ENCODE measurements at regions of chr1 and their contacts with region 1.

Region 1: DNA sequence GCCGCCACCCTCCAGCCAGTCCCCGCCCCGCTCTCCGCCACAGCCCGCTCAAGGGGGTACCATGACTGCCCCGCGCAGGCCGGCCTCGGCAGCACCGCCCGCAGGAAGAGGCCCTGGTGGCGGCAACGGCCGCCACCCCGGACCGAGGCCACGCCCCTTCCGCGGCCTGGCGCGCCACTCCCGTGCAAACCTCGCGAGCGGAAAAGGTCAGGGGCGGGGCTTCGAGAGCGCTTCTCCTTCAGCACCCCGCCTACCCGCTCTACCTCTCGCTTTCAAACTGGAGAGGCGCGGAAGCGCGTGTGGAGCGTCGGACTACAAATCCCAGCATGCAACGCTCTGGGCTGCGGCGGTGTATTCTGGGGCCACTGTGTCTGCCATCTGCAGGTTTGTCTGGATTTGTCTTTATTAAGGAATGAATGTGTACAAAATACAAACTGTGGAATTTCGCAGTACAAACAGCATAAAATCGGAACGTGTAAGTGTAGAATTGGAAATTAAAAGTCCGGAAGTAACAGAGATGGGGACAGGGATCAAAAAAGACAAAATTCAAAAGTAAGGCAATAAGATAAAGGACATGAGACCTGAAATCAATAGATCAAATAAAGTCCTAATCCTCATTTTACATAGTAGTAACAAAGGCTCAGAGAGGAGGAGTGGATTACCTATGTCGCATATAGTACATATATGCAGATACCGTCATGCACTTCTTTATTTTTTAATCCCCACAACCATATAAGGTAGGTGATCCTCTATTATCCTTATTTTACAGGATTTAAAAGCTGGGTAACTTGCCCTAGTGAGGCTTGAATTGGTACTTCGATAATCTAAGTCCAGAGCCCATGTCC is 464 bp upstream of the ADSS2 start:
- DNase-seq: peak; percentile 98 to 99
- H3K4me3 ChIP-seq: peak overlapping the region; percentile 79 to 99
- H3K27ac ChIP-seq: peak overlapping the region; percentile 94
- H3K4me1 ChIP-seq: peaks cover 32% of the 10 kb centered on the region
- H3K27me3 ChIP-seq: no peaks in the 10 kb centered on the region
- CTCF ChIP-seq: peak; percentile 4 to 60 (median 19)
- POLR2A ChIP-seq: no peak

Region 2: GRCh38 chr1:244654341-244655038 is 202.3 kb after region 1 on chr1:
- intact Hi-C with region 1: loop called (anchors 5 kb)
- DNase-seq: no peak
- H3K4me3 ChIP-seq: peak overlapping the region; percentile 83 to 88
- H3K27ac ChIP-seq: peak overlapping the region; percentile 92
- H3K4me1 ChIP-seq: peaks cover 44% of the 10 kb centered on the region
- H3K27me3 ChIP-seq: no peaks in the 10 kb centered on the region
- CTCF ChIP-seq: no peak
- POLR2A ChIP-seq: no peak

Measured in vagina (tissue), 2 donors.